ENCODE measurements at regions of chr3 and their contacts with region 1.

Region 1: DNA sequence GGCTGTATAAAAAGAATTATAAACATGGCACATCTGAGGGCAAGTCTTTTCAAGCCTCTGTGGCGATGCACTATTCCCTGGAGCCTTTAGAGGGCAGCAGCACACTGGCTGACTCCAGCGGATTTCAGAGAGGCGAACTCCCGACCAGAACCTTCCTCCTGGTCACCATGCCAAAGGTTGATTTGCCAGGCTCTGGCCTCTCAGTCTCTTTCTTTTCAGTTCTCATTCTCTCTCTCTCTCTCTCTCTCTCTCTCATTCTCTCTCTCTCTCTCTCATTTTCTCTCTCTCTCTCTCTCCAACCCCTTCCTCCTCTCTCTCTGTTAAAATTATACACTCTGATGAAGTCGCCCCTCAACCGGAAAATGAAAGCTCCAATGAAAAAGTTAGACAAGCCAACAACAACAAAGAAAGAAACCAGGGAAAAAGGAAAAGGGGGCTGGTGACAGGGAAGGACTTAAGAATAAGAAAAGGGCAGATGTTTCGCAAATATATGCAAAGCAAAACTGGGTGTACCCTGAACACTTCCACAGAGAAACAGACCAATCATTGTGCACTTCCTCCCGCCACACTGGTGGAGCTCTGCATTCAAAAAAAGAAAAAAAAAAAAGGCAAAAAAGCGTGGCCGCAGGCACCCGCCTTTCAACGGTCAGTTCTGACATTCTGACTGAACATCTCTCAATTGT is 90.2 kb downstream of the TIGIT start:
- DNase-seq: peak; percentile 84
- ATAC-seq: peak; percentile 88

Region 2: DNA sequence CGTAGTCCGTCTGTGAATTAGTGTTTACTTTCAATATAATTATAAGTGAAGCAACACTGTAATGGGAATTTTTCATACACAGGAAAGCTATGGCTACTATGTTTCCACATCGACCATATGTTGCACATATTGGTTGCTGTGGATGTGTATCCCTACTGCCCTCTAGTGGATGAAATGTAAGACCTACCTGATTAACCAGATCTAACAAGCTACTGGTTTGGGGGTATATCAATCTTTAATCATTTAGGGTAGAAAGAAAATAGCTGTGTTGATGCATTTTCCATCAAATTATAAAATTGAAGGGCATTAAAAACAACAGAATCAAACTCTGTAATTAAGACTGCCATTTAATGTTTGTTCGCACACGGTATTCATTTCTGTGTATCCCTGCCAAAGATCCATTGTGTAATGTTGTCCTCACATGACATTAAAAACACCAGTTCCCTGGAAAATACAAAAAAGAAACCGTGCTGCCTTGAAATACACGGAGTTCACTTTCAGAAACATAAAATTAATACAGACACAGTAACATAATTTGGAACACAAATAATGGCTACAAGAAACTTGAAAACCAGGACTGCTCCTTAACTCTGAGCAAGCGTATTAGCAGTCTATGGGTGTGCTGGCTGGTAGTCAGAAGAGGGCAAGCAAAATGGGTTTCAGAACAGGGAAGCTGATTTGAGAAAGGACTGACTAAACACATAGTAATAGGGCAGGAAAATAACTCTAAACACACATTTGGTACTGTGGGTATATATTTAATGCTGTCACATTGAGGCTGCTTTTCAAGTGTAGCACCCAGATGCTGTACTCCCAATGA is 34.9 kb after region 1 on chr3:
- intact Hi-C with region 1: loop called (anchors 5 kb)
- DNase-seq: no peak
- ATAC-seq: peak; percentile 83